Kidney (tissue), 22 donors: ENCODE measurements at regions of chr22 and their contacts with region 1.

Region 1: GRCh38 chr22:17903564-17904295 is 120.6 kb downstream of the MICAL3 start:
- DNase-seq: no peak
- H3K4me3 ChIP-seq: no peak overlapping the region
- H3K27ac ChIP-seq: no peak overlapping the region
- H3K4me1 ChIP-seq: peaks cover 0 to 9% (median 3%) of the 10 kb centered on the region in 3 donors
- H3K27me3 ChIP-seq: no peaks in the 10 kb centered on the region
- CTCF ChIP-seq: no peak

Region 2: DNA sequence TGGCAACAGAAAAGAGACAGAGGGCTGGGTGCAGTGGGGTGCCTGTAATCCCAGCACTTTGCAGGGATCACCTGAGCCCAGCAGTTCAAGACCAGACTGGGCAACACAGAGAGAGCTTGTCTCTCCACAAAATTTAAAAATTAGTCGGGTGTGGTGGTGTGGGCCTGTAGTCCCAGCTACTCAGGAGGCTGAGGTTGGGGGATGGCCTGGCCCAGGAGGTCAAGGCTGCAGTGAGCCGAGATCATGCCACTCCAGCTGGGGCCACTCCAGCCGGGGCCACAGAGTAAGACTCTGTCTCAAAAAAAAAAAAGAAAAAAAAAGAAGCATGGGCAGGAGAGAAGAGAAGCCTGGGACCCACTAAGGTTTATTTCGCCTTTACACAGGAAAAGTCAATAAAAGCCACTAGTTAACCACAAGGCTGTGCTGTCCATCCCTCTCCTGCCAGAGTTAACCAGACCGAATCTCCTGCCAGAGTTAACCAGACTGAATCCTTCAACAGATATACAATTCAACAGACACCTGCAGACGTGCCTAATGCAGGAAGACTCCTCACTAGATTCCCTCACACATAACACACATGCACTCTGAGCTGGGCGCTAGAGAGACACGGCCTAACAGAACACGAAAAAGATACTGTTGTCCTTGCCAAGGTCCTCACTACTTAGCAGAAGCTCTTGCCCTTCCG is 90.8 kb after region 1 on chr22:
- intact Hi-C with region 1: no loop called
- DNase-seq: no peak
- H3K4me3 ChIP-seq: no peak overlapping the region
- H3K27ac ChIP-seq: no peak overlapping the region
- H3K4me1 ChIP-seq: peaks cover 0 to 20% (median 16%) of the 10 kb centered on the region in 3 donors
- H3K27me3 ChIP-seq: no peaks in the 10 kb centered on the region
- CTCF ChIP-seq: no peak

Region 3: DNA sequence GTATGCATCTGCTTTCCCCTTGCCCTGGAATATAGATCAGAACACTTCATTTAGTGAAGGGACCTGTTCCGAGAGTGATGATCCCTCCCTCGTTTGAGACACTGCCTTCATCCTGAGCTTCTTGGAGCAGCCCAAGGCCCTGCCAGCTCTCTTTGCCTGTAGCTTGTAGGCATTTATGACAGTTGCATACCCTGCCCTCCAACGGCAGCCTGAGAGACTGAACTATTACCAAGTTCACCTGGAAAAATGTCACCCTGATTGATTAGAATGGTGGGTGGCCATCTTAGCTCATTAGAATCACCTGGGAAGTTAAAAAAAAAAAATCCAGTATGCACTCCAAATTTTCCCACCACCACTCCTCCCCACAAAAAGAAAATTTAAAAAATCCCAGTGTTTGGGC is 119.1 kb after region 1 on chr22:
- intact Hi-C with region 1: no loop called
- DNase-seq: no peak
- H3K4me3 ChIP-seq: no peak overlapping the region
- H3K27ac ChIP-seq: peak overlapping the region in 1 of 2 donors; percentile 83
- H3K4me1 ChIP-seq: peaks cover 0 to 11% (median 0%) of the 10 kb centered on the region in 3 donors
- H3K27me3 ChIP-seq: no peaks in the 10 kb centered on the region
- CTCF ChIP-seq: no peak

Region 4: DNA sequence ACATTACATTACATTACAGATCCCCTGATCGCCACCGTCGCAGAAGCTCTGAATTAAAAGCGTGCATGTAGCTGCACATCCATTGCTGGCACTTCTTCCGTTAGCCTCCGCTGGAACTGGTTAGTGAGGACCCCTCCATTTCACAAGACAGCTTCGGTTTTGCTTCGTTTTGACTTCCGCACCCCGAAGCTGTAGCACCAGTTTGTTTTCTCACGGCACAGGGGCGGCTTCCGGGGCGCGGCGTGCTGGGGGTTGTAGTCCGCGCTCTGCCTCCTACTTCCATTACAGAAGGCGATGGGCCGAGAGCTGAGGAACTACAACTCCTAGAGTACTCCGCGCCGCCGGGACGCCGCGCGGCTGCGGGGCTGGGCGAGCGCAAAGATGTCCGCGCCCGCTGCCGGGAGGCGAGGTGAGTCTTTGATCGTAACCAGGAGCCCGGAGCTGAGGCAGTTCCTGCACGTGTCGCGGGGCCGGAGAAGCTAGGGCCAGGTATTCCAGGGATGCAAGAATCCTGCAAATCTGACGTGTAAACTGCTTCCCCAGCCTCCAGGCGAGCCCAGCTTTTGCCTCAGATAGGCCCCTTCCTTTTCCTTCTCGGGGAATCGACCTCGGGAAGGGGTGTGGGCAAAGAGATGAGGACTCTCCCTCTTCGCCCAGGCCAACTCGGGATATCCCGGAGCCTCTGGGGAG is 174.1 kb after region 1 on chr22 and contains the start of gene PEX26:
- intact Hi-C with region 1: loop called (anchors 10 kb)
- DNase-seq: peak; percentile 93 to 98 (median 96)
- H3K4me3 ChIP-seq: peak within 1 kb of the TSS; percentile 88 to 100 (median 95)
- H3K27ac ChIP-seq: peak within 1 kb of the TSS; percentile 64 to 79
- H3K4me1 ChIP-seq: peaks cover 0 to 13% (median 10%) of the 10 kb centered on the region in 3 donors
- H3K27me3 ChIP-seq: no peaks in the 10 kb centered on the region
- CTCF ChIP-seq: no peak
- total RNA-seq, gene PEX26: 45.2 TPM